Psoas muscle (tissue), 8 donors: ENCODE measurements at regions of chr20 and their contacts with region 1.

Region 1: DNA sequence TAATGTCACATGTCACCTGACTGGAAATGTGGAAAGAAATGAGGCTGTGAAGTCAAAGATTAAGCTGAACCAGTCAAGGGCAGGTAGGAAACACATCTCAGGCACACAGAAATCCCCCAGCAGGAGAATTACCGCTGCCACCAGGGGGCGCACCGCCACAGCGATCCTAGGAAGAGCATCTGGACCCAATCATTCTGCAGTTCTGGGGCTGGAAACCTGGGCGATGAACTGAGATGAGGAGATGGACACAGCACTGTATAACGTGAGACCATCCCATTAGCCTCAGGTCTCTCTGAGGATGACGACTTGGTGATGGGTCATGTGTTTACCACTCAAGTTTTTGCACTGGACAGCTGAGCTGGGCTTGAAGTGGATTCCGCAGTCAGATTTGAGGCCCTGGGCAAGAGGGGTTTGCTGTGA is 6.5 kb upstream of the SLC24A3 start:
- DNase-seq: peak; percentile 75 to 87
- ATAC-seq: peak; percentile 76 to 94 (median 82)
- H3K4me3 ChIP-seq: no peak overlapping the region
- H3K27ac ChIP-seq: no peak overlapping the region
- H3K4me1 ChIP-seq: no peaks in the 10 kb centered on the region
- H3K27me3 ChIP-seq: no peaks in the 10 kb centered on the region
- CTCF ChIP-seq: peak; percentile 92

Region 2: DNA sequence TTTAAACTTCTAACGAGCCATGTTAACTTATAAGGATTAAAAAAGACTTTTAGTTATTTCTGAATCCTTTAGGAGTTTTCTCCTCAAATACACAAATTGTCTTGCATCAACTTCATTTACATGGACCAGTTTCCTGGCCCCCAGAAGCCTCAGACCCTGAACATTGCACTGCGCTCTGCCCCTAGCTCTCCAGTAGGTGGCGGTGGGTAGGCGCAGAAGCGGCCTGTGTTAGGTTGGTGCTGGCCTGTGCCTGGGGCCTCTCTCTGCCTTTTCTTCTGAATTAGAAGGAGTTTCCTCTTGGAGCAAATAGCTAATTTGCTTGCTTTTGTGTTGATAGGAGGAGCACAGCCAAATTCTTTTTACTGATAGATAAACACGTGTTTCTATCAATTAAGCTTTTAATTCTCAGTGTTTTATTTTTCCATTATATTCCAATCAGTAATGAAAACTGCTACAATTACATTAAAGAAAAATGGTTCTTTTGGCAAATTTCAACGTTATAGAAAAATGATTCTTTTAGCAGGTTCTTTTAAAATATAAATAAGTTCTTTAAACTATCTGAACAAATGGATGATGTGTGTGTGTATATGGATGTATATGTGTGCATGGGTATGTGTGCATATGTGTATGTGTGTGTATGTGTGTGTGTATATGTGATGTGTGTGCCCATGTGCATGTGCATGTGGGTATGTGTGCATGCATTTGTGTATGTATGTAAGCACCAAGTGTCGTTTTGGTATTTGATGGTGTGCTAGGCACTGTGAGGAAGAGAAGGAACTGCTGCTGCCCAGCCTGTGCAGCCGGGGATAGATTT is 573.6 kb before region 1 on chr20:
- intact Hi-C with region 1: loop called in 1 of 2 experiments (anchors 10 kb)
- DNase-seq: peak; percentile 59 to 76
- ATAC-seq: peak; percentile 90 to 98 (median 92)
- H3K4me3 ChIP-seq: no peak overlapping the region
- H3K27ac ChIP-seq: no peak overlapping the region
- H3K4me1 ChIP-seq: peaks cover 3% of the 10 kb centered on the region
- H3K27me3 ChIP-seq: no peaks in the 10 kb centered on the region
- CTCF ChIP-seq: peak; percentile 92

Region 3: DNA sequence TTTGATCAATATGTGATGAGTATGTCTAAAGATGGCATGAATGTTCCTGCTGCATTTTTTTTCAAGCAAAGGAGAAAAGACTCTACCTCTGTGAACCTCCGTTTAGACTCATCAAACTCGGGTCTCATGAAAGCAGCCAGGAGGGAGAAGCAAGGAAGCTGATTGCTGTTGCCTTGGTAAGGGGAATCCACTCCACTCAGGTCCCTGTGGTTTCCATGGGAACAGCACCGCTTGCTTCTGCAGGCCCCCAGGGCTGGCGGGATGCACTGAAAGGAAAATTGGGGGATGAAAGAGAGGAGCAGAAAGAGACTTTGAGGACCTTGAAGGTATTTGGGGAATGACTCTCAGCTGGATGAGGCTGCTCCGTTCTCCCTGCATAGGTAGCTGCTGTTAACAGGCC is 302.5 kb after region 1 on chr20:
- intact Hi-C with region 1: loop called in 1 of 2 experiments (anchors 5 kb)
- DNase-seq: no peak
- ATAC-seq: no peak
- H3K4me3 ChIP-seq: no peak overlapping the region
- H3K27ac ChIP-seq: no peak overlapping the region
- H3K4me1 ChIP-seq: no peaks in the 10 kb centered on the region
- H3K27me3 ChIP-seq: no peaks in the 10 kb centered on the region
- CTCF ChIP-seq: no peak

Region 4: DNA sequence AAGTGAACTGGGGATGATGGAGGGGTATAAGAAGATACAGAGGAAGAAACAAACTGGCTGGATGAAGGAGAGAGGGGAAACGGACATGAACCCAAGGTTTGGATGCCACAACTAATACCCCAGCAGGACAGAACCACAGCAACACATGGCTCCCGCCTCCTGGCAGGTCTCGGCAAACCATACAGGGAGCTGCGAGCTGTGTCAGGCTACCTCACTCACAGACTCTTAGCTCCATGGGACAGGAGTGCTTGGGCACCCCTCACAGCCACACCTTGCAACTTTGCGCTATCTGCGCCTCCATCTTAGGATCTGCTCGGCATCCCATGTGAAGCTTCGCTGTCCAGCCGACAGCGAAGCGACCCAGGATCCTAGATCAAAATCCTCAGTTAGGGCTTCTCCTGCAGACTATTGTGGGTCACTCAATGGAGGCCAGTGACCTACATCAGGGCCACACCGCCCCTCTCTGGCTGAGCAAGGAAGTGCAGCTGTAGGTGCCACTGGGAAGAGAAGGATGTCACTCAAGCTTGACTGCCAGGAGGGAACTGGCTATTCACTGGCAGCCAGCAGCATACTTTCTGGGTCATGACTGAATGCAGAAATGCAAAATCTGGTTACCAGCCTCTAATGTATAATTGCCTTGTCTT is 377.7 kb after region 1 on chr20:
- intact Hi-C with region 1: loop called in 1 of 2 experiments (anchors 2 kb)
- DNase-seq: peak; percentile 59 to 84
- ATAC-seq: peak; percentile 93 to 97 (median 94)
- H3K4me3 ChIP-seq: no peak overlapping the region
- H3K27ac ChIP-seq: no peak overlapping the region
- H3K4me1 ChIP-seq: peaks cover 5% of the 10 kb centered on the region
- H3K27me3 ChIP-seq: no peaks in the 10 kb centered on the region
- CTCF ChIP-seq: peak; percentile 92